ENCODE measurements at regions of chr5 and their contacts with region 1.

Region 1: GRCh38 chr5:126676195-126676624 is 75.5 kb downstream of the PHAX start:
- DNase-seq: peak; percentile 82
- H3K4me3 ChIP-seq: no peak overlapping the region
- H3K27ac ChIP-seq: no peak overlapping the region
- H3K4me1 ChIP-seq: peaks cover 15% of the 10 kb centered on the region
- CTCF ChIP-seq: peak; percentile 95

Region 2: DNA sequence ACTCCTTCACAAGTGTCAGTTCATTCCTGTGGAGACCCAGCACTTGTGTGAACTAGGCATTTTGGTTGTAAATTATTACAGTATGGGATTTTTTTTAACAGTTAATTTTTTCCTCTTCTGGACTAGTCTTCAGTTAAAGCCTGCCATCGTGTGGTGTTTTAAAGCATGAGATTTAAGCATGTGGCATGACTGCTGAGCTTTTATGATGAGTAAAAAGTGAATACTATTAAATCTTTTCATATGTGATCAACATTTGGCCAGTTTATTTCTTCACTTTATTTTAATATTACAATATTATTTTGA is 125.7 kb after region 1 on chr5:
- CTCF ChIA-PET with region 1: no interaction called
- POLR2A ChIA-PET with region 1: interaction called, 11 read pairs
- intact Hi-C with region 1: no loop called
- DNase-seq: peak; percentile 56
- H3K4me3 ChIP-seq: no peak overlapping the region
- H3K27ac ChIP-seq: peak overlapping the region; percentile 10
- H3K4me1 ChIP-seq: peaks cover 46% of the 10 kb centered on the region
- CTCF ChIP-seq: peak; percentile 77

Measured in OCI-LY7 (cell line).